HepG2 (cell line): ENCODE measurements at regions of chr7 and their contacts with region 1.

Region 1: DNA sequence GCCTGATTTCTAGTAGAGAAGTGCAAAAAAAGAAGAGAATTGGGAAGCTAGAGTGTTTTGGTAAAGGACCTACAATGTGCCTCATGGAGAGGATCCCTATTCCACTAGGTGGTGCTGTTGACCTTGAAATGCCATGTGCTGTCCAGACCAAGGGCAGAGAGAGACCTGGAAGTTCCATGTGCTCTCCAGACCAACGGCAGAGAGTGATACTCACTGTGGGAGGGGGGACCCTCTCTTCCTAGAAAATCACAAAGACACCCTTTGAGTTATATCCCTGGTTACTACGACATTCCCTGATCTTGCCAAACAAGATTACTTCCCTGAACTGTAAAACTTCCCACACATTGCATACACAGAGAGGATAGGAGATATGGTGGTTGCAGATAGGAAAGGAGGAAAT is 212.7 kb upstream of the ZNF804B start:
- DNase-seq: peak; percentile 58
- ATAC-seq: peak; percentile 96
- H3K4me3 ChIP-seq: no peak overlapping the region
- H3K27ac ChIP-seq: no peak overlapping the region
- H3K4me1 ChIP-seq: no peaks in the 10 kb centered on the region
- H3K27me3 ChIP-seq: no peaks in the 10 kb centered on the region
- CTCF ChIP-seq: peak; percentile 89
- EP300 ChIP-seq: no peak
- POLR2A ChIP-seq: no peak
- RAD21 ChIP-seq: peak; percentile 75

Region 2: GRCh38 chr7:88243345-88243909 is 303.4 kb before region 1 on chr7:
- CTCF ChIA-PET with region 1: interaction called, 3 read pairs
- POLR2A ChIA-PET with region 1: no interaction called
- in situ Hi-C with region 1: no loop called
- intact Hi-C with region 1: loop called (anchors 1 kb)
- DNase-seq: peak; percentile 21
- ATAC-seq: peak; percentile 76
- H3K4me3 ChIP-seq: no peak overlapping the region
- H3K27ac ChIP-seq: no peak overlapping the region
- H3K4me1 ChIP-seq: no peaks in the 10 kb centered on the region
- H3K27me3 ChIP-seq: no peaks in the 10 kb centered on the region
- CTCF ChIP-seq: peak; percentile 76
- EP300 ChIP-seq: no peak
- POLR2A ChIP-seq: no peak
- RAD21 ChIP-seq: peak; percentile 41; the same call in 1 of the 2 replicates

Region 3: DNA sequence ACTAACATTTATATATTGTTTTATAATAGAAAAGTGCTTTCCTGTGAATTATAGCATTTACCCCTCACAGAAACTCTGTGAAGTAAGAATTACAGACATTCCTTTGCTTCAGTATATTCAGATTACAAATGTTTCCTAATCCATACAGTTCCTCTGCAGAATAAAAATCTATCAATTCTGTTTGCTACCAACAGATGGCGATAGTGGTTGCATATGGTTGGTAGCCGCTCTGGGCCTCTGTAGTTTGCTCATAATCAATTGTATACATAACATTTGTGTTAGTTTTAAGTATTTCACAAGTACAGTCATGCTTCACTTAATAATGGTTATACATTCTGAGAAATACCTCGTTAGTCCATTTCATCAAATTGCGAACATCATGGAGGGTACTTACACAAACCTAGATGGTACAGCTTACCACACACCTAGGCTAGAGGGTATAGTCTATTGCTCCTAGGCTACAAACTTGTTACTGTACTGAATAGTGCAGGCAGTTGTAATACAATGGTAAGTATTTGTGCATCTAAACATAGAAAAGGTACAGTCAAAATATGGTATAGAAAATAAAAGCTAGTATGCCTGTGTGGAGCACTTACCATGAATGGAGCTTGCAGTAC is 145.7 kb before region 1 on chr7:
- CTCF ChIA-PET with region 1: no interaction called
- POLR2A ChIA-PET with region 1: no interaction called
- in situ Hi-C with region 1: no loop called
- intact Hi-C with region 1: no loop called
- DNase-seq: peak; percentile 14
- ATAC-seq: peak; percentile 84
- H3K4me3 ChIP-seq: no peak overlapping the region
- H3K27ac ChIP-seq: no peak overlapping the region
- H3K4me1 ChIP-seq: no peaks in the 10 kb centered on the region
- H3K27me3 ChIP-seq: no peaks in the 10 kb centered on the region
- CTCF ChIP-seq: peak; percentile 50
- EP300 ChIP-seq: no peak
- POLR2A ChIP-seq: no peak
- RAD21 ChIP-seq: no peak

Region 4: GRCh38 chr7:88485821-88486220 is 61.0 kb before region 1 on chr7:
- CTCF ChIA-PET with region 1: no interaction called
- POLR2A ChIA-PET with region 1: no interaction called
- in situ Hi-C with region 1: no loop called
- intact Hi-C with region 1: no loop called
- DNase-seq: no peak
- ATAC-seq: no peak
- H3K4me3 ChIP-seq: no peak overlapping the region
- H3K27ac ChIP-seq: no peak overlapping the region
- H3K4me1 ChIP-seq: no peaks in the 10 kb centered on the region
- H3K27me3 ChIP-seq: no peaks in the 10 kb centered on the region
- CTCF ChIP-seq: no peak
- EP300 ChIP-seq: no peak
- POLR2A ChIP-seq: no peak
- RAD21 ChIP-seq: no peak

Region 5: GRCh38 chr7:88758381-88759229 is 211.8 kb after region 1 on chr7:
- CTCF ChIA-PET with region 1: no interaction called
- POLR2A ChIA-PET with region 1: no interaction called
- in situ Hi-C with region 1: no loop called
- intact Hi-C with region 1: no loop called
- DNase-seq: no peak
- ATAC-seq: peak; percentile 51
- H3K4me3 ChIP-seq: 0 out of 6 replicates have a peak overlapping the region, but pooled peaks of 1 of the 3 experiments have one; percentile 16
- H3K27ac ChIP-seq: no peak overlapping the region
- H3K4me1 ChIP-seq: no peaks in the 10 kb centered on the region
- H3K27me3 ChIP-seq: peaks cover 0 to 22% of the 10 kb centered on the region in 2 experiments; a peak in 2 of 5 replicates
- CTCF ChIP-seq: no peak
- EP300 ChIP-seq: no peak
- POLR2A ChIP-seq: no peak
- RAD21 ChIP-seq: no peak

Region 6: DNA sequence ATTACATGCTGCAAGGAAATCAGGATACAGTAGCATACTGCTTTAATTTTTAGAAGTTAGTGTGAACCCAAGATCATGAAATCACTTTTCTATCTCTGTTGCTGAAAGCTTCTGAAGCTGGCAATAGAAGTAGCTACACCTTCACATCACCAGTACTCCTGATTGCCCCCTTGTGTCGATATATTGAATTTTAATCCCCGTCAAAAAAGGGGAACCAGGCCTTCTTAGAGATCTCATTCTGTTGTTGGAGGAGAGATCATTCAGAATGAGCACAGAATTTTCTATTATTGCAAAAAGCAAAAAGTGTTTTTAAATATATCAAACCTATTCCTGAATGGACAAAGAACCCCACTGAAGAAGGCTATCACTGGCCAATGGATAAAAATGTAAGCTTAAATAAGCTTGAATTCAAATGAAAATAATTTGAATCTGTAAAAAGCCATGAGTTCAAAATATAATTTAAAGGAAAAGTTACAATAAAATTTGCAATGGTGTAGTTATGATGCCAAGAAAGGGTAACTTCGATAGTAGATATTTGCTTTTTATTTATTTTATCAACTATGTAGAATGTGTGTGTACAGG is 288.4 kb after region 1 on chr7:
- CTCF ChIA-PET with region 1: interaction called, 4 read pairs
- POLR2A ChIA-PET with region 1: no interaction called
- in situ Hi-C with region 1: loop called (anchors 10 kb)
- intact Hi-C with region 1: no loop called
- DNase-seq: peak; percentile 27
- ATAC-seq: peak; percentile 56; the same call in 2 of the 3 replicates
- H3K4me3 ChIP-seq: no peak overlapping the region
- H3K27ac ChIP-seq: no peak overlapping the region
- H3K4me1 ChIP-seq: no peaks in the 10 kb centered on the region
- H3K27me3 ChIP-seq: no peaks in the 10 kb centered on the region
- CTCF ChIP-seq: peak; percentile 50
- EP300 ChIP-seq: no peak
- POLR2A ChIP-seq: no peak
- RAD21 ChIP-seq: no peak

Region 7: GRCh38 chr7:89622838-89623672 is 1076.2 kb after region 1 on chr7:
- CTCF ChIA-PET with region 1: interaction called, 6 read pairs
- POLR2A ChIA-PET with region 1: no interaction called
- in situ Hi-C with region 1: loop called (anchors 10 kb)
- intact Hi-C with region 1: loop called (anchors 1 kb)
- DNase-seq: peak; percentile 41
- ATAC-seq: peak; percentile 86
- H3K4me3 ChIP-seq: no peak overlapping the region
- H3K27ac ChIP-seq: no peak overlapping the region
- H3K4me1 ChIP-seq: no peaks in the 10 kb centered on the region
- H3K27me3 ChIP-seq: no peaks in the 10 kb centered on the region
- CTCF ChIP-seq: peak; percentile 73
- EP300 ChIP-seq: no peak
- POLR2A ChIP-seq: no peak
- RAD21 ChIP-seq: peak; percentile 17; the same call in 1 of the 2 replicates

Region 8: DNA sequence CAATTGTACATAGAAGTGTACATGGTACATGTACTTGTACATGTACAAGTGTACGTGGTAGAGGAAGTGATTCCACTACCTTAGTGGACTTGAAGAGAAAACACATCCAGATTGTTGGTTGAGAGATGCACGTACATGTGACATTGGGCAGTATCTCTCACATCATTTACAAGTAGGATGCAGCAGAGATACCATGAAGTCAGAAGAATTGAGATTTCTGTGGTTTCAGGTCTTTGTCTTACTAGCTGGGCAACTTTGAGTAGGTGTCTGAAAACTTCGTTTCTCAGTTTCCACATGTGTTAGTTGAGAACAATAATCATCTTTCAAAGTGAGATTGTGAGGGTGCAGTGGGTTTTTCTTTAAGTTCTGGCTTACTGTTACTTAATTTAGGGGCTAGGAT is 1877.9 kb after region 1 on chr7:
- CTCF ChIA-PET with region 1: no interaction called
- POLR2A ChIA-PET with region 1: no interaction called
- in situ Hi-C with region 1: no loop called
- intact Hi-C with region 1: loop called (anchors 10 kb)
- DNase-seq: no peak
- ATAC-seq: no peak
- H3K4me3 ChIP-seq: no peak overlapping the region
- H3K27ac ChIP-seq: no peak overlapping the region
- H3K4me1 ChIP-seq: no peaks in the 10 kb centered on the region
- H3K27me3 ChIP-seq: no peaks in the 10 kb centered on the region
- CTCF ChIP-seq: no peak
- EP300 ChIP-seq: no peak
- POLR2A ChIP-seq: no peak
- RAD21 ChIP-seq: no peak